PC-3 (cell line): ENCODE measurements at regions of chr2 and their contacts with region 1.

Region 1: GRCh38 chr2:226411727-226412360 is 387.8 kb downstream of the IRS1 start:
- DNase-seq: peak; percentile 96
- ATAC-seq: peak; percentile 98
- H3K4me3 ChIP-seq: no peak overlapping the region
- H3K27ac ChIP-seq: peak overlapping the region; percentile 78
- H3K4me1 ChIP-seq: peaks cover 21% of the 10 kb centered on the region
- H3K27me3 ChIP-seq: no peaks in the 10 kb centered on the region
- CTCF ChIP-seq: no peak

Region 2: GRCh38 chr2:226274143-226274542 is 137.7 kb before region 1 on chr2:
- CTCF ChIA-PET with region 1: no interaction called
- POLR2A ChIA-PET with region 1: no interaction called
- intact Hi-C with region 1: no loop called
- DNase-seq: peak; percentile 89
- ATAC-seq: peak; percentile 92
- H3K4me3 ChIP-seq: peak overlapping the region; percentile 7; the same call in 1 of the 2 replicates
- H3K27ac ChIP-seq: peak overlapping the region; percentile 68
- H3K4me1 ChIP-seq: peaks cover 17% of the 10 kb centered on the region
- H3K27me3 ChIP-seq: no peaks in the 10 kb centered on the region
- CTCF ChIP-seq: no peak

Region 3: DNA sequence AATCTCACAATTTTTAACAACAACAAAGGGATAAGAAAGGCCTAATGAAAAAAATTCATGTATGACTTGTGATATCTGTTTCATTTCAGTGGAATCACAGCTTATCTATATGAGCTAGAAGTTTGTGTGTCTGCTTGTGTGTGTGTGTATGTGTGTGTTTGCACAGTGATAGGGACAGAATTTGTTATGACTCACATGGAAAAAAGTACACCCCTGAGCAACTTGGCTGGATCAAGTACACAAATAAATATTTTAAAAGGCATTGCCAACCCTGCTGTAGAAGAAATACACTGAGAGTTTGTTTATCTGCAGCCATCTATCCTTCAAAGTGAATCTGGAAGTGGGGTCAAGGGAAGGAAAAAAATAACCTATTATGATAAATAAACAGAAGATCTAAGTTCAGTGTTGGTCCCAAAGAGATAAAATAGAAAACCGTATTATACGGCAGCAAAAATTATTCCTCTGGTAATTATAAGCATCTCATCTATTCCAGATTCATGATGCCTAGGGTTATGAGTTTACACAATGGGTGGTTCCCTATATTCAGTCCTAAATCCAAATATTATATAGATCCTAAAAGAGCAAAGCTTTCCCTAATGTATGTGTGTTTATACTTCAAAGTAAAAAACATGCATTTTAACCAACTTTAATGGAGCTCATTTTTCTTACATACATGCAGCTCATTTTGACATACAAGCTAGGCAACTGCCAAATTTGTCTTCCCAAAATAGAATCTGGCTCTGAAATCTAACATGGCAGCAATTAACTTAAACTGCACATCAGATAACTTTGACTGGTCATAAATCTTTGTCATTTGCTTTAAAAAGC is 32.9 kb before region 1 on chr2:
- CTCF ChIA-PET with region 1: no interaction called
- POLR2A ChIA-PET with region 1: no interaction called
- intact Hi-C with region 1: loop called (anchors 5 kb)
- DNase-seq: peak; percentile 81
- ATAC-seq: peak; percentile 89
- H3K4me3 ChIP-seq: no peak overlapping the region
- H3K27ac ChIP-seq: peak overlapping the region; percentile 33
- H3K4me1 ChIP-seq: peaks cover 18% of the 10 kb centered on the region
- H3K27me3 ChIP-seq: no peaks in the 10 kb centered on the region
- CTCF ChIP-seq: no peak